Heart left ventricle (tissue), 16 donors: ENCODE measurements at regions of chr4 and their contacts with region 1.

Region 1: DNA sequence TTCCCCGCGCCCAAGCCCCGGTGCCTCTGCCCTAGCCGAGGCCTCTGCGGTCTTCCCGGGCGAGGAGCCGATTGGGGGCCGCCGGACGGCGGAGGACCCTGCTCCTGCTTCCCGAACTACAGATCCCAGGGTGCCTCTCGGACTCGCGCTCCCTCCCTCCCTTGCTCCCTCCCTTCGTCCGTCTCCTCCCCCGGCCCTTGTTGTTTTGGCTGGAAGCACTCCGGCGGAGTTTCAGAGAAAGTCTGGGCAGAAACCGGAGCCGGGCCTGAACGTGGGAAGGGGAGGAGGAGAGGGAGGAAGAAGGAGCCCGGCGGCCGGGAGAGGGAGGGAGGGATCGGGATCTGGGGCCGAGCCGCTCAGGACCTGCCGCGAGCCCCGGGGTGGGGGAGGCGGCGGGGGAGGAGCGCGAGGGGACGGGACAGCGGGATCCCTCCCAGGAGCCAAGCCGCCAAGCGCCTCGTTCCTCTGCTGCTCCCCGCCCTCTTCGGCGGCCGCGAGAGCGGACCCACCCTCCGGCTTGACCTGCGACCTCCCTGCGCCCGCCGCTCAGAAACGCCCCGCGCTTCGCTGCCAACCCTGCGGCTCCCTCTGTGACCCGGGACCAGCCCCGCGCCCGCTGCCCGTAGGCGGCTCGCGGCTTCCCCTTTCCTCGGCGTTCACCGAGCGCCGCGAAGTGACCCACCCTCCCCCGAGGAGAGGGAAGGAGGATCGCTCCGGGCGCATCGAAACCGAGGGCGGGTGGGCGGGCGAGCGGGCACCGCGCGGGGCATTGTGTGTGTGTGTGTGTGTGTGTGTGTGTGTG is 496 bp upstream of the GAB1 start:
- DNase-seq: peak; percentile 92 to 94 (median 94)
- ATAC-seq: peak; percentile 86 to 94 (median 91)
- H3K4me3 ChIP-seq: peak overlapping the region; percentile 64 to 99 (median 94)
- H3K27ac ChIP-seq: peak overlapping the region in 11 of 12 donors; percentile 91 to 99 (median 95)
- H3K4me1 ChIP-seq: peaks cover 0 to 42% (median 21%) of the 10 kb centered on the region in 12 donors
- H3K27me3 ChIP-seq: no peaks in the 10 kb centered on the region
- CTCF ChIP-seq: peak in 3 of 12 donors; percentile 16 to 36 (median 28)
- POLR2A ChIP-seq: peak in 1 of 2 donors; percentile 54

Region 2: DNA sequence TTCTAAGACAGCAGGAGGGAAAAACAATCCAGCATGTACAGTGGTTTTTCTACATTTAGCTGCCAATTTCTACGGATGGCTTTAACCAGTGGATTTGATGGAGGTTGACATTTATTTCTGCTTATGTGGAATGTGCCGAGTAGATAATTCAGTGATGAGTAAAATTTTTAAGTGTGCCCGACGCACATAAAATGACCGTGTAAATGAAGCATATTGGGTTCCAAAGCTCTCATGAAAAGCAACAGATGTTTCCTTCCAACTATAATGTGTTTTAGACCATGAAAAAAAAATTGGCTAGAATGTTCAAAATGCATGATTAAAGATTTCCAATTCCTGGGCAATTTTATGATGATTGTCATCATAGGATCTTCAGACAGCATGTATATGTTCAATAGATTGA is 504.2 kb before region 1 on chr4:
- intact Hi-C with region 1: no loop called
- DNase-seq: no peak
- ATAC-seq: no peak
- H3K4me3 ChIP-seq: no peak overlapping the region
- H3K27ac ChIP-seq: no peak overlapping the region
- H3K4me1 ChIP-seq: peaks cover 0 to 3% (median 0%) of the 10 kb centered on the region in 12 donors
- H3K27me3 ChIP-seq: no peaks in the 10 kb centered on the region
- CTCF ChIP-seq: no peak
- POLR2A ChIP-seq: no peak

Region 3: DNA sequence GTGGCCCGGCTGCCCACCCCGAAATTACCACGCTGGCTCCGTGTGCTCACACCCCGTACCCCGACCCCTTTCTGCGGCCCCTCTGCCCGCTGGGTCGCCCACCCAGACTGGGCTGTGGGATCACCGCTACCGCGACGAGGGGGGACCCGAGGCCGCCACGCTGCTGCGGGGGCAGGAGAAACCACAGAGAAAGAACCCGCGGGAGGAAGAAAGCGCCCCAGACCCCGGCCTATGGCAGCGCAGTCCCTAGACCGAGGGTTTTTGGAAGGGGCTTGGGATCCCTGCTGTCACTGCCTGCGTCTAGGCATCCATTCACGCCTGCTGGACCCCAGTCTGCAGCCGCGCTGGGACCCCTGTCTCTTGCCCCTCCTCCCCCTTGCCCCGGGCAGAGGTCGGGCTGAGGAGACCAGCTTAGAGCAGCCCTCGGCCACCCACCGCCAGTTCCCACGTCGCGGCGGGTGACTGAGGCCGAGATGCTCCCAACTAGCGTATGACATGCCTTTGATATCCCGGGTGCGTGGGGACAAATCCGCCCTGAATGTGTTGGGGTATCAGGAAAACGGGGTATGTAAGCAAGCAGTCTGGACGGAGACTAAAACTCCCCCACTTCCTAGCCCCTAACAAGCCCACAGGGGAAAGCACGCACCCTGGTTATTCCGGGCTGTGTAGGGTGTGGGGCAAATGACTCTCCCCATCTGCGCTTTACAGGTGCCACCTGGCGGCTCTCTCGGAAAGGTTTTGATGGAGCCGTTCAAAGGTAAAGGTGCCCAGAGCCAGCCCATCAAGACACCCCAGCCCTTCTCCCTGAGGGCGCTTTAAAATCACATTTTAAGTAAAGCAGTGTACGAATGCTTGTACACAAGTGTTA is 489.2 kb before region 1 on chr4:
- intact Hi-C with region 1: no loop called
- DNase-seq: peak; percentile 41 to 68 (median 48)
- ATAC-seq: peak; percentile 75 to 84 (median 78)
- H3K4me3 ChIP-seq: peak overlapping the region; percentile 57 to 85 (median 72)
- H3K27ac ChIP-seq: peak overlapping the region; percentile 73 to 96 (median 86)
- H3K4me1 ChIP-seq: peaks cover 0 to 27% (median 2%) of the 10 kb centered on the region in 12 donors
- H3K27me3 ChIP-seq: peaks cover 0 to 46% (median 2%) of the 10 kb centered on the region in 9 donors
- CTCF ChIP-seq: peak in 8 of 12 donors; percentile 29 to 55 (median 40)
- POLR2A ChIP-seq: no peak

Region 4: GRCh38 chr4:142984871-142985585 is 351.2 kb before region 1 on chr4:
- intact Hi-C with region 1: no loop called
- DNase-seq: no peak
- ATAC-seq: no peak
- H3K4me3 ChIP-seq: no peak overlapping the region
- H3K27ac ChIP-seq: no peak overlapping the region
- H3K4me1 ChIP-seq: peaks cover 0 to 7% (median 0%) of the 10 kb centered on the region in 12 donors
- H3K27me3 ChIP-seq: no peaks in the 10 kb centered on the region
- CTCF ChIP-seq: peak in 8 of 12 donors; percentile 10 to 34 (median 19)
- POLR2A ChIP-seq: no peak

Region 5: DNA sequence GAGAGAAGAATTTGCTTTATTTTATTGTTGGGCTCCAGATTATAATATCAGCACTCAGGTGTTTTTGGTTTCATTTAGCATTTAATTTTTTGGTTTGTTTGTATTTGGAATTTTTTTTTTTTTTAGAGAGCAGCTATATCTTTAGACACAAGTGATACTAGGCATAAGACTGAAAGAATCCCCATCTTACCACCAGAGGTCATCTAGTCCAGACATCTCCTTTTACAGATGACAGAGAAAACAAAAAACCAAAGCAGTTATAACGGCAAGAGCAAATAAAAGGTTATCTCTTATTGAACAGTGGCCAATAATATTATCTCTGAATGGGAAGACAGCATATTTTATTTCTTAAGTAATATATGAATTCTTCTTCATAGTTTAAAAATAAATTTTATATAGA is 128.6 kb before region 1 on chr4:
- intact Hi-C with region 1: loop called in 7 of 10 experiments (anchors 5 kb)
- DNase-seq: no peak
- ATAC-seq: peak in 2 of 4 donors; percentile 61 to 69
- H3K4me3 ChIP-seq: no peak overlapping the region
- H3K27ac ChIP-seq: no peak overlapping the region
- H3K4me1 ChIP-seq: peaks cover 0 to 10% (median 4%) of the 10 kb centered on the region in 12 donors
- H3K27me3 ChIP-seq: no peaks in the 10 kb centered on the region
- CTCF ChIP-seq: peak; percentile 14 to 67 (median 51)
- POLR2A ChIP-seq: no peak

Region 6: DNA sequence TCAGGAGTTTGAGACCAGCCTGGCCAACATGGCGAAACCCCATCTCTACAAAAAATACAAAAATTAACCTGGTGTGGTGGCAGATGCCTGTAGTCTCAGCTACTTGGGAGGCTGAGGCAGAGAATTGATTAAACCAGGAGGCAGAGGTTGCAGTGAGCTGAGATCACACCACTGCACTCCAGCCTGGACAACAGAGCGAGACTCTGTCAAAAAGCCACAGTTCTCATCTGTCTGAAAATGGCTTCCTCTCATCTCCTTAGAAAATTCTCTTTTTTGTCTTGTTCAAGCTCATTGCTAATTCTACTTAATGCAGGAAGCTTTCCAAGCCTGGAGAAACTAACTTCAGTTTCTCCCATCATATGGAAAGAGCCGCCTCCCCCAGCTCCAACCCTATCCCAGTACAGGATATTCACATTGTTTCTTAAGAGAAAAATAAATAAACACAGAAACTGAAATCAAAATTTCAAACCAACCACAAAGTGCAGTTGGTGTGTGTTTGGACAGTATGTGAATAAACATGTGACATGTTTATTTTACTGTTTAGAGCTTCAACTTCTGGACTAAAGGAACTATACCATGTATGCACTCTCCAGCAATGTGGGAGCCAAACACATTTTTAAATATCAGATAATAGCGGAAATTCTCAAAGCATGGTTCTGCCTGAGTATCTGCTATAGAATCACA is 54.5 kb before region 1 on chr4:
- intact Hi-C with region 1: loop called in 5 of 10 experiments (anchors 5 to 10 kb)
- DNase-seq: no peak
- ATAC-seq: peak in 1 of 4 donors; percentile 16
- H3K4me3 ChIP-seq: no peak overlapping the region
- H3K27ac ChIP-seq: peak overlapping the region in 10 of 12 donors; percentile 5 to 62 (median 54)
- H3K4me1 ChIP-seq: peaks cover 0 to 39% (median 7%) of the 10 kb centered on the region in 12 donors
- H3K27me3 ChIP-seq: no peaks in the 10 kb centered on the region
- CTCF ChIP-seq: no peak
- POLR2A ChIP-seq: no peak

Region 7: DNA sequence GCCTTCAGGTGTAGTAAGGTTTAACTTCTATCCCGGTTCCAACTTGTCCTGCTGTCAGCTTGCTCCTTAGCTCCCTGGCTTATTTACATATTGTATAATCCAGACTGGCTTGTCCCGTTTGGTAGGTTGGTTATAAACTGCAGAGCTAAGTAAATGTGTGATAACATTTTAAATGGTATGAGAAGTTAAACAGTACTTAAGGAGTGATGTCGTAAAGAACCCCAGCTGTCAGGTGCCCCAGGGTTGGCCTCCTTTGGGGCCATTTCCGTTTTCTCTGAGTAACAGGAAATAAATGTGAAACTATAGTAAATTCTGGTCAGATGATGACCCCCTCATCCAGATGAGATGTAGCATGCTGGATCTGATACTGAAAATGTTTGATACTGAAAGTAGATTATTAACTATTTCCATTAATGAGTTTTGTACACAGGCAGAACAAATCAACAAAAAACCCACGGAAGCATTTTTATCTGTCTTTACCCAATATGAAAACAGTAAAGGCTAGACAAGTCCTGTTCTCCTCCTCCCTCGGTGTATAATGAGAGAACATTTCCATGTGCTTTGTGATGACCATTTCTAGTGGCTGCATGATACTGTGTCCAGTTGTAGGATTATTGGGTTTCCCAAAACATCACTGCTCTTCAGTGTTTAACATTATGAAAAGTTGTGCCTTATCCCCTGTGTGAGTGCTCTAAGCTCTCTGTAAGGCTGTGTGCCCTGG is 22.9 kb after region 1 on chr4:
- intact Hi-C with region 1: no loop called
- DNase-seq: peak in 1 of 5 donors; percentile 30
- ATAC-seq: peak in 3 of 4 donors; percentile 27 to 55 (median 45)
- H3K4me3 ChIP-seq: peak overlapping the region in 2 of 12 donors; percentile 4
- H3K27ac ChIP-seq: peak overlapping the region in 11 of 12 donors; percentile 1 to 82 (median 37)
- H3K4me1 ChIP-seq: peaks cover 6 to 99% (median 84%) of the 10 kb centered on the region in 12 donors
- H3K27me3 ChIP-seq: no peaks in the 10 kb centered on the region
- CTCF ChIP-seq: no peak
- POLR2A ChIP-seq: no peak

Region 8: GRCh38 chr4:143375313-143376073 is 39.3 kb after region 1 on chr4:
- intact Hi-C with region 1: loop called in 4 of 10 experiments (anchors 2 to 5 kb)
- DNase-seq: peak in 3 of 5 donors; percentile 37 to 50 (median 47)
- ATAC-seq: peak; percentile 34 to 78 (median 74)
- H3K4me3 ChIP-seq: no peak overlapping the region
- H3K27ac ChIP-seq: peak overlapping the region in 7 of 12 donors; percentile 16 to 83 (median 64)
- H3K4me1 ChIP-seq: peaks cover 4 to 88% (median 70%) of the 10 kb centered on the region in 12 donors
- H3K27me3 ChIP-seq: no peaks in the 10 kb centered on the region
- CTCF ChIP-seq: peak in 9 of 12 donors; percentile 11 to 49 (median 42)
- POLR2A ChIP-seq: no peak

Region 9: GRCh38 chr4:143399113-143399949 is 63.2 kb after region 1 on chr4:
- intact Hi-C with region 1: loop called in 5 of 10 experiments (anchors 5 to 10 kb)
- DNase-seq: no peak
- ATAC-seq: peak in 1 of 4 donors; percentile 31
- H3K4me3 ChIP-seq: no peak overlapping the region
- H3K27ac ChIP-seq: peak overlapping the region in 3 of 12 donors; percentile 19 to 38 (median 21)
- H3K4me1 ChIP-seq: peaks cover 3 to 90% (median 59%) of the 10 kb centered on the region in 12 donors
- H3K27me3 ChIP-seq: no peaks in the 10 kb centered on the region
- CTCF ChIP-seq: peak; percentile 48 to 80 (median 62)
- POLR2A ChIP-seq: no peak

Region 10: GRCh38 chr4:143482840-143483239 is 146.7 kb after region 1 on chr4:
- intact Hi-C with region 1: loop called in 4 of 10 experiments (anchors 10 kb)
- DNase-seq: peak in 1 of 5 donors; percentile 23
- ATAC-seq: peak in 3 of 4 donors; percentile 20 to 72 (median 57)
- H3K4me3 ChIP-seq: no peak overlapping the region
- H3K27ac ChIP-seq: no peak overlapping the region
- H3K4me1 ChIP-seq: peaks cover 0 to 6% (median 0%) of the 10 kb centered on the region in 12 donors
- H3K27me3 ChIP-seq: no peaks in the 10 kb centered on the region
- CTCF ChIP-seq: peak; percentile 38 to 79 (median 68)
- POLR2A ChIP-seq: no peak